Activated CD4-positive, alpha-beta memory T cell treated with anti-CD3 and anti-CD28 coated beads for 36 hours (primary cell): ENCODE measurements at regions of chr6 and their contacts with region 1.

Region 1: DNA sequence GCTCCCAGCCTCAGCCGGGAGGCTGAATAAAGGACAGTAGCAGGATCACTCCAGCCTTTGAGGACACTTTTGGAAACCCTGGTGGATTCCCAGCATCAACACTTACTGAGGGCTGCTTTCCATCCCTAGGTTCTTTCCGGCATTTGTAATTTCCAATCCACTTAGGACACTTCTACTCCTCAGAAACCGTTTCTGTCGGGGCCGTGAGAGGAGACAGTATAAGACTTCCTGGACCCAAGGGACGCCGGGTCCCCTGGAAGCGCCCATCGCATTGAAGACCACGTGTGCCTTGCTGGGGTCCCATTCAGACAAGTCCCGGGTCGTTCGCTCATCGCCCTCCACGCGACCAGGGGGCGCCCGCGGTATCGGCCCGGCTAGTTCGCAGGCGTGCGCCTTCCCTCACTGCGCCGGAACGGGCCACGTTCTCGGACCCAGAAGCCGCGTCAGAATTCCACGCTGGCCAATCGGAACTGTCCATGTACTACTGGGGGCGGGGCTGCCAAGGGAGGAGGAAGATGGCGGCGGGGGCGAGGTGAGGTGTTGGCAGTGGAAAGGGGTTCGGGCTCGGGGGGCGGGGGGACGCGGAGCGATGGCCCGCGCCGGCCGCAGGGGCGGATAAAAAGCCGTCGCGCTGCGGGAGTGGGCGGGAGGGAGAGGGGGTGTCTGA is at the start of gene NUS1:
- DNase-seq: peak; percentile 99
- H3K4me3 Mint-ChIP-seq: peak within 1 kb of the TSS; percentile 95
- H3K27ac Mint-ChIP-seq: peak within 1 kb of the TSS; percentile 89
- H3K4me1 Mint-ChIP-seq: peaks cover 43% of the 10 kb centered on the region
- H3K27me3 Mint-ChIP-seq: no peaks in the 10 kb centered on the region
- total RNA-seq, gene NUS1: 33.6 to 33.9 TPM

Region 2: GRCh38 chr6:117482240-117483003 is 192.7 kb before region 1 on chr6 and contains the start of gene DCBLD1:
- CTCF ChIA-PET with region 1: no interaction called
- POLR2A ChIA-PET with region 1: no interaction called
- intact Hi-C with region 1: loop called (anchors 2 kb)
- DNase-seq: peak; percentile 74
- H3K4me3 Mint-ChIP-seq: peak within 1 kb of the TSS; percentile 82
- H3K27ac Mint-ChIP-seq: no peak within 1 kb of the TSS
- H3K4me1 Mint-ChIP-seq: peaks cover 12% of the 10 kb centered on the region
- H3K27me3 Mint-ChIP-seq: peaks cover 23% of the 10 kb centered on the region
- total RNA-seq, gene DCBLD1: 4.4 to 4.5 TPM